Left ventricle myocardium superior (tissue), 1 donor: ENCODE measurements at regions of chr15 and their contacts with region 1.

Region 1: GRCh38 chr15:65384895-65385858 is 7.4 kb upstream of the IGDCC3 start:
- DNase-seq: peak; percentile 89
- ATAC-seq: peak; percentile 96

Region 2: DNA sequence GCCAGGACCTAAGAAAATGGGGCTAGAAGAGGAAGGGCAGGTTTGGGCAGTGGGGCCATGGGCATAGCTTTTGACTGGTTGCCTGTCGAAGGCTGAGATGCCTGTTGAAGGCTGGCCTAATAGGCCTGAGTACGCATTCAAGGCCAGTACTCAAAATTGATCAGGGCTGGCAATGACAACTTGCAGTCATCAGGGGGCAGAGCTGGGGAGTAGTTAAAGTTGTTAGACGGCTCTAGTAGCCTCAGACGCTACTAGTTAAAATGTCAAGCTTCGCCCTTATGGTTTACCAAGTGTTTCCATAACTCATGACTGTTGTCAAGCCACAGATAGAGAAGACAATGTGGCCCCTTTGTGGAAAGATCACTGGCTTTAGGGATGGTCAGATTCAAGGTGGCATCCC is 424.2 kb before region 1 on chr15:
- intact Hi-C with region 1: no loop called
- DNase-seq: no peak
- ATAC-seq: no peak

Region 3: DNA sequence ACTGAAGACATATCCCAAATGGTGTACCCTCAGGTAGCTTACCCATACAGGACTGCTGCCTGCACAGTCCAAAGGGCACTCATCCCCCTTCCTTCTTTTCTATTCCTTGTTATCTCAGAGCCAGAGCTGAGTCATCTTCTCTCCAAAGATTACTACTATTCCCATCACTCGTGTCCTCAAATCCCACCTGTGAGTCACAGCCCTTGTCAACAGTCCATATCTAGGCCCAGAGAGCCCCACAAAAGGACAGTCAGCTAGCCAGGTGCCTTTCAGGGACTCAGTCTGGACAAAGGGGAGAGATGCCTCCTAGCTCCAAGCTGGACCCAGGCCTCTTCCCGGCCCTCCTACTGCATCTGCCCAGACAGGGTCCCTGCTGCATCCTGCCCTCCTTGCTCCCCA is 109.5 kb before region 1 on chr15:
- intact Hi-C with region 1: no loop called
- DNase-seq: no peak
- ATAC-seq: peak; percentile 14

Region 4: GRCh38 chr15:65323071-65323511 is 62.1 kb before region 1 on chr15:
- intact Hi-C with region 1: loop called (anchors 5 kb)
- DNase-seq: peak; percentile 86
- ATAC-seq: peak; percentile 93